ENCODE measurements at regions of chr10 and their contacts with region 1.

Region 1: GRCh38 chr10:77520995-77521394 is 116.6 kb downstream of the KCNMA1 start:
- DNase-seq: no peak
- ATAC-seq: no peak
- H3K4me3 ChIP-seq: no peak overlapping the region
- H3K27ac ChIP-seq: no peak overlapping the region
- H3K4me1 ChIP-seq: no peaks in the 10 kb centered on the region
- H3K27me3 ChIP-seq: peaks cover 0 to 32% (median 4%) of the 10 kb centered on the region in 7 donors
- CTCF ChIP-seq: no peak

Region 2: DNA sequence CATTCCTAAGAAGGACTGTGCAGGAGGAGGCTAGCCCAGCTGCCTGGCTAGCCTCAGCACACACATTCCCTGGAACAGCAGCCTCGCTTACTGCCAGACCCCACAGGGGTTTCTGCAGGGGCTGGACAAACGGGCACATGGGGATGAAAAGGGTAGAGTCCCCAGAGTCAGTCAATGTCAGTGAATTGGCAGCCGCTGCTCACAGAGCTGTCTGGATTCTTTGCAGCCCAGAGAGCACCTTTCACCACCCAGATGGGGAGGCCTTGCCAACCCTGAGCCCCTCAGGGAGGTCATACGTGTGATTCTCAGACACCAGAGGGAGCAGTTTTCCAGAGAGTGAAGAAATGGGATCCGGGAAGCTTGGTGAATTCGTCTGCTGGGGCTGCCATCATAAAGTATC is 26.7 kb before region 1 on chr10:
- intact Hi-C with region 1: loop called in 1 of 10 experiments (anchors 1 kb)
- DNase-seq: no peak
- ATAC-seq: peak in 3 of 8 donors; percentile 16 to 59 (median 34)
- H3K4me3 ChIP-seq: no peak overlapping the region
- H3K27ac ChIP-seq: no peak overlapping the region
- H3K4me1 ChIP-seq: peaks cover 0 to 7% (median 0%) of the 10 kb centered on the region in 9 donors
- H3K27me3 ChIP-seq: peaks cover 0 to 11% (median 0%) of the 10 kb centered on the region in 7 donors
- CTCF ChIP-seq: peak in 7 of 9 donors; percentile 24 to 45 (median 35)

Region 3: GRCh38 chr10:77685432-77685831 is 164.4 kb after region 1 on chr10:
- intact Hi-C with region 1: no loop called
- DNase-seq: no peak
- ATAC-seq: no peak
- H3K4me3 ChIP-seq: no peak overlapping the region
- H3K27ac ChIP-seq: no peak overlapping the region
- H3K4me1 ChIP-seq: no peaks in the 10 kb centered on the region
- H3K27me3 ChIP-seq: peaks cover 0 to 64% (median 45%) of the 10 kb centered on the region in 7 donors
- CTCF ChIP-seq: no peak

Region 4: DNA sequence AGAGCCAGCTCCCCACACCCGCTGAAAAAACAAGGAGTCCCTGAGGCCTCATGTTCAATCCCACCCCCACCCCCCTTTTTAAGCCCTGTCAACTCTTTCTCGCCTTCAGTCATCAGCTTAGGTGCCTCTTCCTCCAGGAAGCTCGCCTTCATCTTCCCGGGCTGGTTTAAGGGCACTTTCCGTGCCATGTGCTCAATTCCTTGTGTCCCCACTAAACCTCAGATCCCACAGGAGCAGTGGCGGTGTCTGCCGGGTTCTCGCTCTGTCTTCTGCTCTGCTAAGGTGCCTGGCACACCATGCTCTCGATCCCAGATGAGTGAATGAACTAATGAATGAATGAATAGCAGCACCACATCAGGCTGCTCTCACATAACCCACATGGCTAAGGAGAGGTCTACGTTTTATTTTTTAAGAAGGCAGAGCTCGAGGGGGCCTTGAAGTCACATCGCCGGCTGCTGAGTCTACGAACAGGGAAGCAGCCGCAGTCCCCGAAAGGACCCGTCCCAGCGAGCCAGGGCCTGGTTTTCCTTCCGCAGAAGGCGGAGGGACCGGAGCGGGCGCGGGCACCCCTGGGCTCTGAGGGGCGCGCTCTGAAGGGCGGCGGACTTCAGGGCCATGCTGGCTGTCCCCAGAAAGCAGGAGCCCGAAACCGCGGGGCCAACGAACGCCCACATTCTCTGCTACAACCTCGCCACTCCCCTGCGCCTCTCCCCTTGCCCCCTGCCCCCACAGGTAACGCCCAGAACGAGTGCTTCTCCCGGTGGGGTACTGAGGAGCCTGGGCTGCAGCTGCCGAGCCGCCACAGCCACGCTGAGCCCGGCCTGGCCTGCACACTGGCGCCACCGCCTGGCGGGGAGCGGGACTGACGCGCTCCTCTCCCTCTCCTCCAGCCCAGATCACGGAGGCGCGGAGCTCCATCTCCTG is 190.0 kb after region 1 on chr10:
- intact Hi-C with region 1: no loop called
- DNase-seq: peak; percentile 59 to 82
- ATAC-seq: peak; percentile 92 to 96 (median 93)
- H3K4me3 ChIP-seq: peak overlapping the region in 9 of 10 donors; percentile 31 to 52 (median 46)
- H3K27ac ChIP-seq: no peak overlapping the region
- H3K4me1 ChIP-seq: peaks cover 0 to 9% (median 5%) of the 10 kb centered on the region in 9 donors
- H3K27me3 ChIP-seq: peaks cover 0 to 70% (median 45%) of the 10 kb centered on the region in 7 donors
- CTCF ChIP-seq: peak; percentile 91 to 99 (median 95)

Measured in heart right ventricle (tissue), 16 donors.